HepG2 (cell line): ENCODE measurements at regions of chr11 and their contacts with region 1.

Region 1: GRCh38 chr11:9757809-9758636 is 94.1 kb downstream of the SWAP70 start:
- DNase-seq: peak; percentile 63
- ATAC-seq: peak; percentile 84
- H3K4me3 ChIP-seq: peak overlapping the region; percentile 63 to 87 (median 77)
- H3K27ac ChIP-seq: peak overlapping the region; percentile 90
- H3K4me1 ChIP-seq: peaks cover 57% of the 10 kb centered on the region
- H3K27me3 ChIP-seq: no peaks in the 10 kb centered on the region; a peak in 1 of 5 replicates
- CTCF ChIP-seq: peak; percentile 71; the same call in 1 of the 2 replicates
- EP300 ChIP-seq: no peak
- POLR2A ChIP-seq: peak; percentile 19 to 89; a peak in 3 of 4 replicates
- RAD21 ChIP-seq: peak; percentile 98

Region 2: GRCh38 chr11:9691865-9692264 is 66.2 kb before region 1 on chr11:
- CTCF ChIA-PET with region 1: no interaction called
- POLR2A ChIA-PET with region 1: no interaction called
- in situ Hi-C with region 1: loop called (anchors 10 kb)
- intact Hi-C with region 1: no loop called
- DNase-seq: no peak
- ATAC-seq: no peak
- H3K4me3 ChIP-seq: no peak overlapping the region
- H3K27ac ChIP-seq: no peak overlapping the region
- H3K4me1 ChIP-seq: no peaks in the 10 kb centered on the region
- H3K27me3 ChIP-seq: no peaks in the 10 kb centered on the region
- CTCF ChIP-seq: no peak
- EP300 ChIP-seq: no peak
- POLR2A ChIP-seq: no peak
- RAD21 ChIP-seq: no peak

Region 3: GRCh38 chr11:9861860-9862725 is 104.1 kb after region 1 on chr11:
- CTCF ChIA-PET with region 1: interaction called, 10 read pairs
- POLR2A ChIA-PET with region 1: no interaction called
- in situ Hi-C with region 1: loop called (anchors 10 kb)
- intact Hi-C with region 1: loop called (anchors 2 kb)
- DNase-seq: peak; percentile 64
- ATAC-seq: peak; percentile 97
- H3K4me3 ChIP-seq: no peak overlapping the region
- H3K27ac ChIP-seq: no peak overlapping the region
- H3K4me1 ChIP-seq: peaks cover 28% of the 10 kb centered on the region
- H3K27me3 ChIP-seq: no peaks in the 10 kb centered on the region
- CTCF ChIP-seq: peak; percentile 89
- EP300 ChIP-seq: no peak
- POLR2A ChIP-seq: no peak
- RAD21 ChIP-seq: peak; percentile 84

Region 4: GRCh38 chr11:9922806-9923205 is 164.8 kb after region 1 on chr11:
- CTCF ChIA-PET with region 1: no interaction called
- POLR2A ChIA-PET with region 1: no interaction called
- in situ Hi-C with region 1: no loop called
- intact Hi-C with region 1: no loop called
- DNase-seq: no peak
- ATAC-seq: no peak
- H3K4me3 ChIP-seq: no peak overlapping the region
- H3K27ac ChIP-seq: no peak overlapping the region
- H3K4me1 ChIP-seq: peaks cover 22% of the 10 kb centered on the region
- H3K27me3 ChIP-seq: no peaks in the 10 kb centered on the region
- CTCF ChIP-seq: no peak
- EP300 ChIP-seq: no peak
- POLR2A ChIP-seq: no peak
- RAD21 ChIP-seq: no peak

Region 5: GRCh38 chr11:9972989-9973388 is 215.0 kb after region 1 on chr11:
- CTCF ChIA-PET with region 1: interaction called, 20 read pairs
- POLR2A ChIA-PET with region 1: no interaction called
- in situ Hi-C with region 1: loop called (anchors 5 kb)
- intact Hi-C with region 1: loop called (anchors 1 kb)
- DNase-seq: peak; percentile 40
- ATAC-seq: peak; percentile 57
- H3K4me3 ChIP-seq: no peak overlapping the region
- H3K27ac ChIP-seq: no peak overlapping the region
- H3K4me1 ChIP-seq: no peaks in the 10 kb centered on the region
- H3K27me3 ChIP-seq: no peaks in the 10 kb centered on the region
- CTCF ChIP-seq: peak; percentile 79
- EP300 ChIP-seq: no peak
- POLR2A ChIP-seq: no peak
- RAD21 ChIP-seq: peak; percentile 77

Region 6: GRCh38 chr11:10322830-10323792 is 565.1 kb after region 1 on chr11:
- CTCF ChIA-PET with region 1: no interaction called
- POLR2A ChIA-PET with region 1: interaction called, 15 read pairs
- in situ Hi-C with region 1: loop called (anchors 10 kb)
- intact Hi-C with region 1: no loop called
- DNase-seq: peak; percentile 84
- ATAC-seq: peak; percentile 34
- H3K4me3 ChIP-seq: peak overlapping the region; percentile 38 to 56 (median 49); a peak in 5 of 6 replicates
- H3K27ac ChIP-seq: peak overlapping the region; percentile 60
- H3K4me1 ChIP-seq: peaks cover 78% of the 10 kb centered on the region
- H3K27me3 ChIP-seq: no peaks in the 10 kb centered on the region
- CTCF ChIP-seq: peak; percentile 68
- EP300 ChIP-seq: peak in 1 of 2 experiments; percentile 57; a peak in 1 of 4 replicates
- POLR2A ChIP-seq: 0 out of 4 replicates have a peak, but pooled peaks of 1 of the 2 experiments have one; percentile 29
- RAD21 ChIP-seq: peak; percentile 58; the same call in 1 of the 2 replicates